Aorta (tissue), 5 donors: ENCODE measurements at regions of chr14 and their contacts with region 1.

Region 1: DNA sequence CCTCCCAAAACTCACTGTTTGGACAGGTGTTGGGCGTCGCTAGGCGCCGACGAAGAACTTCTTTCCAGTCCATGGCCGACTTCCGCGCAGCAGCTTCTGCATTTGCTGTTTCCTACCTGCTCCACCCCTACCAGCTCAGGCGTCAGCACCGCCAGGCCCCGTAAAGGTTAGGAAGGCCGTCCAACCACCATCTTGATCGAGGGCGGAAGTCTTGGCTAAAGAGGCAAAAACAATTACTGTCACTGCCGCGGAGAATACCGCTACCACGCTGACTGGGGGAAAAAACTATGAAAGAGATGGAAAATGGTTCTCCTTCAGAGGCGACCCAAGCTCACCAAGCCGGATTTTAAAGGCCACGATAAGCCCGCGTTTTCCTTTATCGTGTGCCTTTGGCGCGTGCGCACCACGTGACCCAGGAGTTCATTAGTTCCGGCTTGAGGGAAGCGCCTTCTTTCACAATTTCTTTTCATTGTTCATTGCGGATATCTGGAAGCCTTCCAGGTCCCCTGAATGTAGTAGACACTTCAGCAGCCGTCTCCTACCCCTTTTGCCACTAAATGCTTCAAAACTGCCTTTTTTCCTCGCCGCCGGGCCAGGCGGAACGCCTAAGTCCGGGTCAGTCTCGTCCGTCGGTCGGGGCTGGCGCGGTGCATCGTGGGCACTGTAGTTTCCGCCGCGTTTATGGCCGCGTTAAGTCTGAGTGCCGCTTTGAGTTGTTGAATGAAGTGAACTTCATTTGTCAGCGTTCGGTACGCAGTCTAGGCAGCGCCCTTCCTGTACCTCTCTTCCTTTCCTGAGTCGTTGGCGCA is at the starts of genes PPP2R3C and PRORP:
- DNase-seq: peak; percentile 95
- ATAC-seq: peak; percentile 98
- H3K4me3 ChIP-seq: peak within 1 kb of the TSS; percentile 38 to 85
- H3K27ac ChIP-seq: peak within 1 kb of the TSS; percentile 70 to 80
- H3K4me1 ChIP-seq: no peaks in the 10 kb centered on the region
- H3K27me3 ChIP-seq: no peaks in the 10 kb centered on the region
- total RNA-seq, gene PPP2R3C: 33.1 to 36.6 TPM
- total RNA-seq, gene PRORP: 20.0 to 20.4 TPM

Region 2: GRCh38 chr14:34982417-34983147 is 139.5 kb before region 1 on chr14 and contains the start of gene SRP54:
- intact Hi-C with region 1: loop called in 1 of 2 experiments (anchors 5 kb)
- DNase-seq: peak; percentile 99
- ATAC-seq: peak; percentile 98
- H3K4me3 ChIP-seq: peak within 1 kb of the TSS; percentile 71 to 85
- H3K27ac ChIP-seq: peak within 1 kb of the TSS; percentile 73 to 88
- H3K4me1 ChIP-seq: no peaks in the 10 kb centered on the region
- H3K27me3 ChIP-seq: no peaks in the 10 kb centered on the region
- total RNA-seq, gene SRP54: 48.7 to 57.5 TPM

Region 3: GRCh38 chr14:35046048-35046741 is 75.9 kb before region 1 on chr14 and contains the start of gene FAM177A1:
- intact Hi-C with region 1: loop called (anchors 2 to 5 kb)
- DNase-seq: peak; percentile 99 to 100
- ATAC-seq: peak; percentile 99
- H3K4me3 ChIP-seq: peak within 1 kb of the TSS; percentile 67 to 83
- H3K27ac ChIP-seq: peak within 1 kb of the TSS; percentile 97 to 99
- H3K4me1 ChIP-seq: peaks cover 0 to 6% of the 10 kb centered on the region in 2 donors
- H3K27me3 ChIP-seq: no peaks in the 10 kb centered on the region
- total RNA-seq, gene FAM177A1: 70.7 to 94.0 TPM

Region 4: DNA sequence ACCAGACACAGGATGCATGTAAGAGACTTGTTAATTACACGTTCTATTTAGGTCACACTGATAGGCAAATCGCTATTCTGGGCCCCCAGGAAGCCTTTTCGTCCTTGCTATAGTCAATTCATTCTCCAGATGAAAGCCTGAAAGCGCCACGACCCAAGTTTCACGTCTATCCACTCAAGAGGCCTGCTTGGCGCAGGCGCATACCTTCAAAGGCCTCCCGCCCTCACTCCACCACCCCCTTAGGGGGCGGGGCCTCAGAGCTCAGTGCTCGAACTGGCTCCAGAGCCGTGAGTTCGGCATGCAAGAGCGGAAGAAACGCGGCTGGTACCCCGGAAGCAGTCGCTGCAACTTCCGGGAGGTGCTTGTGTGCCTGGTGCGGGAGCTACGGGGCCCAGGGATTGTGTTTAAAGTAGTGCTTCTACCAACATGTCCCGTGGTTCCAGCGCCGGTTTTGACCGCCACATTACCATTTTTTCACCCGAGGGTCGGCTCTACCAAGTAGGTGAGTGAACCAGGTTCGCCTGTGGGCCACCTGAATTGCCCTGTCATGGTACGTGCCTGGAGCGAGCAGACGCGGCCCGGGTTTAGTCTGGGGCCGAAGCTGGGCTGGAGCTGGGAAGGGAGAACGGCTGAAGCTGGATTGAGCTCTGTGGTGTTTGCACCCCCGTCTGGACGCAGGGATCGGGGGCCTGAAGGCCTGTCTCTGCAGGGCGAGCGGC is 170.1 kb after region 1 on chr14 and contains the start of gene PSMA6:
- intact Hi-C with region 1: loop called in 1 of 2 experiments (anchors 10 kb)
- DNase-seq: peak; percentile 99
- ATAC-seq: peak; percentile 100
- H3K4me3 ChIP-seq: peak within 1 kb of the TSS; percentile 74 to 93
- H3K27ac ChIP-seq: peak within 1 kb of the TSS in 1 of 2 donors; percentile 74
- H3K4me1 ChIP-seq: peaks cover 0 to 2% of the 10 kb centered on the region in 2 donors
- H3K27me3 ChIP-seq: no peaks in the 10 kb centered on the region
- total RNA-seq, gene PSMA6: 91.6 to 109 TPM

Region 5: DNA sequence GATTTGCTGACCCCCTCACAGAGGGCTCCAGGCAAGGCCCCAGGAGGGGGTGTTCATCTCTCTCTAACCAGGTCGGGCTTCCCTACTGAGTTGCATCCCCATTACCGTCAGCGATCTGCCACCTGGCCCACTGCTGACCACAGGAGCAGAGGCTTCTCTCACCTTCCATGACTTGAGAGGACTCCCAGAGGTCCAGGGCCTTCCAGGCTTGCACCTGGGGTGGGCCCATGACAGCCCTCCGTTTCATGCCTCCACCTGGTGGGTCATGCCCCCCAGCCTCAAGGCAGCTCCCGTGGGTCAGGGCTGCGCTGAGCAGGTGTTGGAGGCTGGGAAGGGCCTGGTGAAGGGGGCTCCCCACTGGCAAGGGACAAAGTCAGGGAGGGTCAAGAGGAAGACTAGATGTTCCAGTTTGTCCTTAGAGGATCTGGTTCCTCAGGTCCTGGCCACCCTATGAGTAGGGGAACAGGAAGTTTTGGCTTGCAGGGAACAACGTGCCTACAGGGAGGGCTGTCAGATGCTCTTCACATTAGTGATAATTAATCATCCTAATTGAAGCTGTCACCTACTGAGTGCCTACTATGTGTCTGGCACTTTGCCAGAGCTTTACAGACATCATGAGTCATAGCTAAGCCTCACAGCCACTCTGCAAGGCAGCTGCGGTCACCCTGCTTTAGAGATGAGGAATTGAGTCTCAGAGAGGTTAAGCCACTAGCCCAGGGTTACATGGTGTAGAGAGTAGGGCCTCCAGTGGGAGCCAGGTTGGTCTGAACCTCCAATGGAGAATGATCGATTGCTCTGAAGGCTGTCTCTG is 268.7 kb after region 1 on chr14:
- intact Hi-C with region 1: no loop called
- DNase-seq: peak; percentile 33 to 46
- ATAC-seq: no peak
- H3K4me3 ChIP-seq: no peak overlapping the region
- H3K27ac ChIP-seq: no peak overlapping the region
- H3K4me1 ChIP-seq: no peaks in the 10 kb centered on the region
- H3K27me3 ChIP-seq: no peaks in the 10 kb centered on the region

Region 6: GRCh38 chr14:35404449-35405303 is 282.6 kb after region 1 on chr14 and contains the start of gene NFKBIA:
- intact Hi-C with region 1: loop called in 1 of 2 experiments (anchors 5 kb)
- DNase-seq: peak; percentile 95 to 97
- ATAC-seq: peak; percentile 89
- H3K4me3 ChIP-seq: peak within 1 kb of the TSS; percentile 94 to 97
- H3K27ac ChIP-seq: peak within 1 kb of the TSS; percentile 95 to 99
- H3K4me1 ChIP-seq: peaks cover 0 to 4% of the 10 kb centered on the region in 2 donors
- H3K27me3 ChIP-seq: no peaks in the 10 kb centered on the region
- total RNA-seq, gene NFKBIA: 126 to 186 TPM

Region 7: DNA sequence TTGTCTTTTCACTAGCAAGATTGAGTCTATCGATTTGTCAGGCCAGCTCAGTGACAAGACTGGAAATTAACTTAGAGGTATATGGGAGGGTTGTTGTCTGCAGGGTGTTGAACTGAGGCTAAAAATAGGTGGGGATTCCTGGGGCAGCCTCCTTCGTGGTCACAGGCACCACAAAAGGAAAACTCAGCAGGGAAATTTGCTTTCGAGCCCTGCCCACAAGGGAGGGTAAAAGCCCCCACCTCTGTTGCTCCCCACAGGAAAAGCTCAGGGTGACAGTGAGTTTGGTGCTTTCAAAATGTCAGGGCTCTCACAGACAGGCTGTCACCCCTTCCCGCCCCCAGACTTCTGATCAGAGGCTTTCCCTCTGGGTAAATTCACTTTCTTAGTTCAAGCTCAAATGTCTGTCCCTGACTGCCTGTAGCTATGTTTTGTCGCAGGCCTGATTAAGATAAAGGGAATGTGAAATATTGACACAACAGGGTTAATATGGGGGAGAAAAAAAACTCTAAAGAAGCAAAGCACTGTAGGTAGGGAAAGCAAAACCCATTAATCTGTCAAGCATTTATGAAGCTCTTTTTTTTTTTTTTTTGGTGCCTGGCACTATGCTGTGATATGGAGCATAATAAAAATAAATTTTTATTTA is 294.1 kb after region 1 on chr14:
- intact Hi-C with region 1: loop called in 1 of 2 experiments (anchors 5 kb)
- DNase-seq: no peak
- ATAC-seq: no peak
- H3K4me3 ChIP-seq: no peak overlapping the region
- H3K27ac ChIP-seq: peak overlapping the region in 1 of 2 donors; percentile 12
- H3K4me1 ChIP-seq: peaks cover 2 to 4% of the 10 kb centered on the region in 2 donors
- H3K27me3 ChIP-seq: no peaks in the 10 kb centered on the region

Region 8: DNA sequence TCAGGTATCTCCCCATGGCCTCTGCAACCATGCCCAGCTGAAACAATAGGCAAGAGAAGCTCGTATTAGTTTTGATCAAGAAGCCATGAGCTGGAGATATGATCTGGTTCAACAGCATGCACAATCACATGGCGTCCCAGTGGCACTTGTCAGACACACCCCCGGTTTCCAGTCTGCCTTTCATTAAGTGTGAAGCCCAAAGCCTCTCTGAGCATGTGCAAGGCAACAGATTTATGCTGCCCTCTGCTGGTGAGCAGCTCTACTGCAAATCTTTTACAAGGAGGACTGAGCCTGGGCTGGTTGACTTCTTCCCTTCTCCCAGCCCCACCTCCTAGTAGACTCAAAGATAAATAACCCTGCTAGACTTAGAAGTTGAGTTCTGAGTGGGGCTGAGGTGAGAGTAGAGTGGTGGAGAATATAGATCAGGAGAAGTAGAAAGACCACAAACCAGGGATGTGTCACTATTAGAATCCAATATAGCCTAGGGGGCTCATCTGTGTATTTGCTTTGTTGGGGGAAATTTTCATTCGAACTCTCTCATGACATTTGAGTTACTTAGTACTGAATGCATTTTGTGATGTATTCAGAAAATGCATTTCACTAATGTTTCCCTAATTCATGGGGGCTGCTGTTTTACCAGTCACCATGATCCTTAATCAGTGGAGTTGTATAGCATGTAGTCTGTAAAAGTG is 1252.0 kb after region 1 on chr14:
- intact Hi-C with region 1: no loop called
- DNase-seq: peak; percentile 77 to 80
- ATAC-seq: peak; percentile 79
- H3K4me3 ChIP-seq: no peak overlapping the region
- H3K27ac ChIP-seq: no peak overlapping the region
- H3K4me1 ChIP-seq: no peaks in the 10 kb centered on the region
- H3K27me3 ChIP-seq: no peaks in the 10 kb centered on the region